ENCODE measurements at regions of chr5 and their contacts with region 1.

Region 1: GRCh38 chr5:41817625-41818301 is 52.5 kb downstream of the OXCT1 start:
- DNase-seq: no peak
- ATAC-seq: peak; percentile 57
- H3K4me3 ChIP-seq: no peak overlapping the region
- H3K27ac ChIP-seq: no peak overlapping the region
- H3K4me1 ChIP-seq: no peaks in the 10 kb centered on the region
- H3K27me3 ChIP-seq: no peaks in the 10 kb centered on the region
- CTCF ChIP-seq: no peak

Region 2: GRCh38 chr5:41788800-41789395 is 28.9 kb before region 1 on chr5:
- CTCF ChIA-PET with region 1: no interaction called
- POLR2A ChIA-PET with region 1: interaction called, 25 read pairs
- intact Hi-C with region 1: no loop called
- DNase-seq: peak; percentile 82
- ATAC-seq: peak; percentile 64
- H3K4me3 ChIP-seq: peak overlapping the region; percentile 44
- H3K27ac ChIP-seq: peak overlapping the region; percentile 77
- H3K4me1 ChIP-seq: peaks cover 57% of the 10 kb centered on the region
- H3K27me3 ChIP-seq: no peaks in the 10 kb centered on the region
- CTCF ChIP-seq: no peak